B cell (primary cell): ENCODE measurements at regions of chr3 and their contacts with region 1.

Region 1: DNA sequence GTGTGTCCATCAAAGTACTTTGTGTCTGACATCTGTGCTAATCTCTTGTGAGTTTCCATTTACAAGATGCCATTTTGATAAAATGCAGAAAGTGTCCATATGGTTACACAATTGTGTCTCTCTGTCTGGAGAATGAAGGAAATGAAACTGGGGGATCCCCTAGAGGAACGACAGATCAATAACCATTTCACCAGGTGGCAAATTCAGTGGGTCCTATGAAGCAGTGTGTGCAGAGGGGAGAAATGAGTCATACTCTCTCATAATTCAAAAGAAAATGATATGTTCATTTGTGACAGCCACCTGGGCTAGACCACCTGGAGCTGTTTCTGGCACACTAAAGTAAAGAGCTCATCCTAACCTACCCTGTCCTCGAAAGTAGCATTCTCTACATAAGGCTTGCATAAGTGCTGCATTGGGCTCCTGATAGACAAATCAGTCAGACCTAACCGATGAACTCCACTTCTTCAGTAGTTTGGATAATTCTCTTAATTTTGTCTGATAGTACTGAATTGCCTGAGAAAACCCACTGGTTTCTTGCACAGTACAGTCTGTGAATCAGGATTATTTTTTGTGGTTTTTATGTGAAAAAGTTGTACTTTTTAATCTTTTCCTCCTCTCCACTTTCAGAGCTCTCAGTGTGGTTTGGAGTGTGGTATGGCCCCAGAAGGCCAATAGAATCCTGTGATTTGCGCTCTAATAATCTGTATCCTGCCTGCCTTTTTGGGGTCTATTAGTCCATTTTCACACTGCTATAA is 10.3 kb upstream of the CD47 start:
- DNase-seq: peak; percentile 85
- ATAC-seq: peak; percentile 83
- H3K4me3 ChIP-seq: no peak overlapping the region
- H3K4me3 Mint-ChIP-seq: peak overlapping the region; percentile 44
- H3K27ac ChIP-seq: peak overlapping the region; percentile 56 to 89
- H3K27ac Mint-ChIP-seq: peak overlapping the region; percentile 88
- H3K4me1 ChIP-seq: peaks cover 48% of the 10 kb centered on the region in 2 donors
- H3K4me1 Mint-ChIP-seq: peaks cover 58% of the 10 kb centered on the region
- H3K27me3 ChIP-seq: no peaks in the 10 kb centered on the region
- H3K27me3 Mint-ChIP-seq: no peaks in the 10 kb centered on the region
- CTCF ChIP-seq: no peak

Region 2: GRCh38 chr3:108117241-108117775 is 16.2 kb after region 1 on chr3:
- CTCF ChIA-PET with region 1: no interaction called
- POLR2A ChIA-PET with region 1: no interaction called
- intact Hi-C with region 1: loop called (anchors 1 kb)
- DNase-seq: no peak
- ATAC-seq: no peak
- H3K4me3 ChIP-seq: no peak overlapping the region
- H3K4me3 Mint-ChIP-seq: no peak overlapping the region
- H3K27ac ChIP-seq: no peak overlapping the region
- H3K27ac Mint-ChIP-seq: no peak overlapping the region
- H3K4me1 ChIP-seq: peaks cover 21 to 26% of the 10 kb centered on the region in 2 donors
- H3K4me1 Mint-ChIP-seq: peaks cover 36% of the 10 kb centered on the region
- H3K27me3 ChIP-seq: no peaks in the 10 kb centered on the region
- H3K27me3 Mint-ChIP-seq: no peaks in the 10 kb centered on the region
- CTCF ChIP-seq: no peak